GM18951 (cell line): ENCODE measurements at regions of chr10 and their contacts with region 1.

Region 1: DNA sequence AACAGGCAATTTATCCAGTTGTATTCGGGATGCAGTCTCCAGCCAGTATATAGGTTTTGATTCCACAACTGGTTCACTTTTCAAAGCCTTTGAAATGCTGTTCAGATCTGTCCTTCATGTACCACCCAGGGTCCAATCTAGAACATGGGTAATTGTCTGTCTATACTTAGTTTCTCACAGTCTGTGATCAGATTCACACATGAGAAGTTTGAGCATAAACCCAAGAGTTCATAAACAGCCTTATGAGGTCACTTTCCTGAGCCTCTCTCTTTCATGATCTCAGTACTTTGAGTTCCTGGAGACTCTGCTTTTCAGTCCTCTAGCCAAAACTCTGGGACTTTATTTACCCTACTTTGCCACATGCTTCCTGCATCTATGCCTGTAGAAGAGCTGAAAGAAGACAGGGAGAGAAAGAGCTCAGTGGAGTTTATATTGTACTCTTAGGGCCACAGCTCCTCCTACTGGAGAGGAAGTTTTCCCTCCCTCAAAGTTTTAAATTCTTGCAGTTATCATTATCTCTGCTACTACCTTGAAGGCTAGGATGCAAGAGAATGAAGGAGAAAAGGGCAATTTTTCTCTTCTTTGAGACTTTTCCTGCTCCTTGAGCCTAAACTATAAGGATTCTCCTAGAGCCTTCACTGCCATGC is 172.0 kb downstream of the ZEB1 start:
- POLR2A ChIP-seq: no peak

Region 2: GRCh38 chr10:30783939-30784500 is 707.0 kb before region 1 on chr10:
- in situ Hi-C with region 1: loop called (anchors 25 kb)
- POLR2A ChIP-seq: no peak